Panc1 (cell line): ENCODE measurements at regions of chr10 and their contacts with region 1.

Region 1: DNA sequence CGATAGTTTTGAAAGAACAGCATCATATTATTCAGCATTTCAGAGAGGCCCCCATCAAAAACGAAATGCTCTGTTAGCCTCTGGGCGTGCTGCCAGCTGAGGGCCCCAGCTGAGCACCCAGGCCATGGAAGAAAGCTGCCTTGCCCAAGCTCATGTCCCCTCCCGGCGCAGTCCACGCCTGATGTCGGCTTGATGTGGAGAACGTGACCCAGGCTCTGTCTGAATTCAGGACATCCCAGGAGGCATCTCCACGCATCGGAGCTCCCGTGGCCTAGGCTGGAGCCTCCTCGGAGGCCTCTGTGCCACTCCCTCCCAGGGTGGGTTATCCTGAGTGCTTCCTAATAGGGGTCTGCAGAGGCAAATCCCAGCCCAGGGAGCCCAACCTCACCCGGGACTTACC is 218.3 kb upstream of the AKR1E2 start:
- DNase-seq: no peak
- ATAC-seq: no peak
- H3K4me3 ChIP-seq: no peak overlapping the region
- H3K27ac ChIP-seq: no peak overlapping the region
- H3K4me1 ChIP-seq: no peaks in the 10 kb centered on the region
- H3K27me3 ChIP-seq: no peaks in the 10 kb centered on the region
- CTCF ChIP-seq: no peak

Region 2: DNA sequence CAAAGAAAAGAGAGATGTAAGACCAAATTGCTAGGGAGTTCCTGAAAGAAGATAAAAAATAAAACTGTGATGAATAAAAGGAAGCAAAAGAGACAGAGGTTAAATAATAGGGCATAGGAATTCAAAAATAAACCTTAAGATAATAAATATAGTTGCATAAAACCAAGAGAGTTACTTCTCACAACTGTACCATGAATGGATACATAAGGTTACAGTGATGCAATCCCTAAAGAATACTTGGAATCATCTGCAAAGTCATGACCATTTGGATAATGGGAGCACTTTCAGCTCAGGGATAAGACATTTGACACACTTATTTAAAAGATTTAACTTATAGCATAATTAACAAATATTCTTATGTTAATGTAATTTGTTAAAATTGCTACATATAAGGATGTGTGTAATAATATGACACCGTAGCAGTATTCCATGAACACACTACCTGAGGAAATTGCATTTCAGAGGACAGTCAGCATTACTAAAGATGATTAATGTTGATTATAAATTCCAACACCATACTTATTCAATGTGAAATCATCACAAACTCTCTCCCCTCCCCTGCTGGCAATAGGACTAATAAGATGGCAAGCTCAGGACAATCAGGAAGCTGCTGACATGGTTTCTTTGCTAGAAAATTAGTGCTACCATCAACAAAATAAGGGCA is 16.2 kb after region 1 on chr10:
- CTCF ChIA-PET with region 1: no interaction called
- POLR2A ChIA-PET with region 1: no interaction called
- in situ Hi-C with region 1: no loop called
- intact Hi-C with region 1: no loop called
- DNase-seq: no peak
- ATAC-seq: no peak
- H3K4me3 ChIP-seq: no peak overlapping the region
- H3K27ac ChIP-seq: no peak overlapping the region
- H3K4me1 ChIP-seq: no peaks in the 10 kb centered on the region
- H3K27me3 ChIP-seq: no peaks in the 10 kb centered on the region
- CTCF ChIP-seq: no peak

Region 3: DNA sequence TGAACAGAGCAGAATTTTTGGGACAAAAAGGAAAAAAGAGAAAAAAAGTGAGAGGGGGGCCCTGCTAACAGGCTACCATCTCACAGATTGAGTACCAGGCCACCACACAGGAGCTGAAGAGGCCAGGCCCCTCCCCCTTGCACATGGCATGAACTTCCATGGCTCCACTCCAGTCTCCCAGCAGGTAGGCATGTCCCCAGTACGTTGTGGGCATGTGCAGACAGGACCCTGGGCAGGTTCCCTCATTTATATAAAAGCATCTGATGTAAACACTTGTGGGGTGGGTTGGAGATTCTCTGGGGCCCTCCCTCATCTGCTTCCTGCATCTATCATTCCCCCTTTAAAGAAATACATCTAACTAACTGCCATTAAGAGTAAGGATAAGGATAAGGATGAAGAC is 310.6 kb after region 1 on chr10:
- CTCF ChIA-PET with region 1: no interaction called
- POLR2A ChIA-PET with region 1: no interaction called
- in situ Hi-C with region 1: no loop called
- intact Hi-C with region 1: no loop called
- DNase-seq: no peak
- ATAC-seq: no peak
- H3K4me3 ChIP-seq: no peak overlapping the region
- H3K27ac ChIP-seq: no peak overlapping the region
- H3K4me1 ChIP-seq: no peaks in the 10 kb centered on the region
- H3K27me3 ChIP-seq: no peaks in the 10 kb centered on the region
- CTCF ChIP-seq: no peak

Region 4: DNA sequence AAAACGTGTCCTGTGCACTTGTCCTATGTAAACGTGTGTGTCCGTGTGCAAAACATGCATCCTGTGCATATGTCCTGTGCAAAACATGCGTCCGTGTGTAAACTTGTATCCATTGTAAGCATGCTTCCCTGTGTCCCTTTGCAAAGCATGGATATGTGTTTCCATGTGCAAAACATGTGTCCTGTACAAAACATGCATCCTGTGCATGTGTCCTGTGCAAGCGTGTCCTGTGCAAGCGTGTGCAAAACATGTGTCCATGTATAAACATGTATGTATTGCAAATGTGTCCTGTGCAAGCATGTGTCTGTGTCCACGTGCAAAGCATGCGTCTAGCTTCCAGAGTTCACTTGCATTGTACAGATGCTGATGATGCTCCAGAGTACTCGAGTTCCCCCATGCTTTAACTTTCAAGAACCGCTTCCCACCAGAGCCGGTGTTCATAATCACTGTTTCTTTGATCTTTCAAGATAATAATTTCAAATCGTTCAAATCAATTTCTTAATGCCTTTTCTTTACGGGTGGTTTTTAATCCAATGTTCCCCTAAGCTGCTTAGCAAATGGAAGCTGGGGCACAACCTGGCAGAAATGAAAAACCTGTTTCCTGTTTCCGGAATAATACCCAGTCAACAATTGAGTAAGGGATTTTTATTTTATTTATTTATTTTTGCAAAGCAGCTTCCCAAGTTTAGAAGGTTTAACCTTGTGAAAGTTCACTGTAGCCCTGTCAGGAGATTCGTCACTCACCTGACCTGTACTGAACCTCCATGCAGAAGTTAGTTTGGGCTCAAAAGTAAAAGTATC is 1059.3 kb after region 1 on chr10:
- CTCF ChIA-PET with region 1: no interaction called
- POLR2A ChIA-PET with region 1: interaction called, 12 read pairs
- in situ Hi-C with region 1: no loop called
- intact Hi-C with region 1: no loop called
- DNase-seq: no peak
- ATAC-seq: no peak
- H3K4me3 ChIP-seq: peak overlapping the region; percentile 63 to 71
- H3K27ac ChIP-seq: no peak overlapping the region
- H3K4me1 ChIP-seq: peaks cover 4% of the 10 kb centered on the region; the same call in 1 of the 2 replicates
- H3K27me3 ChIP-seq: no peaks in the 10 kb centered on the region
- CTCF ChIP-seq: no peak